ENCODE measurements at regions of chr9 and their contacts with region 1.

Region 1: DNA sequence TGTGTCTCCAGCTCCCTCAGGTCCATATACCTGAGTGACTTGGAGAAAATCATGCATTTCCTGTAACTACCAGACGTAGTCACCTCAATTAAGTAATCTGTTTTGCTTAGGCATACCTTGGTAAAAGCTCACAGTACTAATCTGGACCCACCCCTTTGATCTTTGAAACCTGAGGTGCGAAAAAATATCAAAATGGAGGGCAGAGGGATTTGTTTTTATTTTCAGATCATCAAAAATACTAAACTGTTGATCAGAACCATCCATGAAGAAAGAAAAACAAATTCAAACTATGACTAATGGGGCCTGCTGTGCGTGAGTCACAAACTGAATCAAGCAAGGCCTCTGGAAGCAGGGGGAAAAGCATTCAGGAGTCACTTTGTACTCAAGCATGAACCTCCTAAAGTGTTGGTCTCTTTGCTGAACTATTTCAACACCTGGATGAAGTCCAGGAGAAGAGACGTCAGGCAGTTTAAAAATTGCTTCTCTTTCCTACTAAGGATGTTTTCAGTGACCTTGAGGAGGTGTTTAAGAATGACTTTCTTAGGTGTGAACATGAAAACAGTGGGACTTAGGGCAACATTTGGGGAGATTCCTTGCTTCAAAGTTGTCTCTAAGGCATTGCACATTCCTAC is 76.3 kb downstream of the MUSK start:
- DNase-seq: no peak
- ATAC-seq: peak; percentile 71
- H3K4me3 ChIP-seq: no peak overlapping the region
- H3K27ac ChIP-seq: peak overlapping the region; percentile 69 to 96
- H3K4me1 ChIP-seq: peaks cover 0 to 9% of the 10 kb centered on the region in 2 donors
- H3K27me3 ChIP-seq: no peaks in the 10 kb centered on the region

Region 2: DNA sequence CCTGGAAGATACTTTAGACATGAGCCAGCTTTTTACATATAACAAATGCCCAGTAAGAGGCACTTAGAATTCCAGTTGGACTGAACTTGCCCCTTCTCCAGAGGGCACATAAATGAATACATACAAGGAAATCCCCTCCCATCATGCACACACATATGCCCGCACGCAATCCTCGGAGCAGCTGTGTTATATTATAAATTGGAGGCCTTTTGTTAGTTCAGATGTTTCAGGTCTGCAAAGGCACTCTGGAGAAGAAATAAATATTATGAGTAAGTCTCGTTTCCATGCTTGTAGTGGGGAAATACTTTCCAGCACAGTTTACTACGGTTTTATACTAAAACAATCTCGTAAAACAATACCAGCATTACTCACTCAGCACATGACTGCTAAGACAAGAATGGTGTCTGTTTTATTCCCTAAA is 93.9 kb before region 1 on chr9:
- intact Hi-C with region 1: loop called (anchors 5 kb)
- DNase-seq: peak in 1 of 2 donors; percentile 37
- ATAC-seq: peak; percentile 59
- H3K4me3 ChIP-seq: no peak overlapping the region
- H3K27ac ChIP-seq: no peak overlapping the region
- H3K4me1 ChIP-seq: no peaks in the 10 kb centered on the region
- H3K27me3 ChIP-seq: no peaks in the 10 kb centered on the region

Region 3: DNA sequence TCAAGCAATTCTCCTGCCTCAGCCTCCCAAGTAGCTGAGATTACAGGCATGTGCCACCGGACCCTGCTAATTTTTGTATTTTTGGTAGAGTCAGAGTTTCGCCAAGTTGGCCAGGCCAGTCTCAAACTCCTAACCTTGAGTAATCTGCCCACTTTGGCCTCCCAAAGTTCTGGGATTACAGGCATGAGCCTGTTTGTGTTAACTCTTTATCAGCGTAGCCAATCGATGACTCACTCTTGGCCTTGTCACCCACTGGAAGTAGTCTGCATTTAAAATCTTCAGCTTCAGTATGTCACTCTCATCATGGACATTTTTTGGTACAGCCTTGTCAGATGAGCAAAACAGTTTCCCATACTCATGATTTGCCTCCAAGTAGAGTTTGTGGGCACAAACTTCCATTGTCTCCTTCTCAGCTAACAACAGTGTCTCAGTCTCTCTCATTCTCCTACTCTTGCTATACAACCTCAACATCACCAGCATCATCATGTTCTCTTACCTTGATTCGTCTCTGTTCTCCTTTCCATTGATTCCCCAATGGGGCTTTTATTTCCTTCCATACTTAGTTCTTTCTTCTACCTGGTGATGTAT is 53.8 kb before region 1 on chr9:
- intact Hi-C with region 1: loop called (anchors 5 to 10 kb)
- DNase-seq: no peak
- ATAC-seq: no peak
- H3K4me3 ChIP-seq: no peak overlapping the region
- H3K27ac ChIP-seq: no peak overlapping the region
- H3K4me1 ChIP-seq: peaks cover 2% of the 10 kb centered on the region in 2 donors
- H3K27me3 ChIP-seq: no peaks in the 10 kb centered on the region

Region 4: GRCh38 chr9:110895147-110895905 is 150.5 kb after region 1 on chr9:
- intact Hi-C with region 1: loop called in 1 of 2 experiments (anchors 10 kb)
- DNase-seq: peak; percentile 63 to 76
- ATAC-seq: peak; percentile 78
- H3K4me3 ChIP-seq: no peak overlapping the region
- H3K27ac ChIP-seq: peak overlapping the region in 1 of 2 donors; percentile 72
- H3K4me1 ChIP-seq: peaks cover 12 to 14% of the 10 kb centered on the region in 2 donors
- H3K27me3 ChIP-seq: no peaks in the 10 kb centered on the region

Measured in aorta (tissue), 5 donors.